MCF 10A (cell line): ENCODE measurements at regions of chr2 and their contacts with region 1.

Region 1: GRCh38 chr2:139142252-139142880 is 362.2 kb upstream of the NXPH2 start:
- DNase-seq: peak; percentile 33
- H3K4me3 Mint-ChIP-seq: no peak overlapping the region
- H3K27ac Mint-ChIP-seq: no peak overlapping the region
- H3K4me1 Mint-ChIP-seq: no peaks in the 10 kb centered on the region
- H3K27me3 Mint-ChIP-seq: no peaks in the 10 kb centered on the region
- CTCF ChIP-seq: no peak

Region 2: GRCh38 chr2:139124271-139124670 is 18.1 kb before region 1 on chr2:
- CTCF ChIA-PET with region 1: no interaction called
- POLR2A ChIA-PET with region 1: interaction called, 4 read pairs
- intact Hi-C with region 1: loop called (anchors 2 kb)
- DNase-seq: no peak
- H3K4me3 Mint-ChIP-seq: no peak overlapping the region
- H3K27ac Mint-ChIP-seq: no peak overlapping the region
- H3K4me1 Mint-ChIP-seq: no peaks in the 10 kb centered on the region
- H3K27me3 Mint-ChIP-seq: no peaks in the 10 kb centered on the region
- CTCF ChIP-seq: no peak

Region 3: DNA sequence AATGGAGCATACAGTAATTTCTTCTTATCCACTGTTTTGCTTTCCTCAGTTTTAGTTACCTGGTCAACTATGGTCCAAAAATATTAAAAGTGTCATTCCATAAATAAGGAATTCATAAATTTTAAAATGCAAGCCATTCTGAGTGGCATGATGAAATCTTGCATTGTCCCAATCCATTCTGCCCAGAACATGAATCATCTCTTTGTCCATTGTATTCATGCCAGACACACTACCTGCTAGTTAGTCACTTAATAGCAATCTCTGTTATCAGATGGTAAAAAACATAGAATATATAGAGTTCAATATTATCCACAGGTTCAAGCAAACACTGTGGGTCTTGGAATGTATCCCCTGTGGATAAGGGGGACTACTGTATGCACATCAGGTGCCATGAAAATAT is 510.0 kb after region 1 on chr2:
- CTCF ChIA-PET with region 1: no interaction called
- POLR2A ChIA-PET with region 1: no interaction called
- intact Hi-C with region 1: no loop called
- DNase-seq: no peak
- H3K4me3 Mint-ChIP-seq: no peak overlapping the region
- H3K27ac Mint-ChIP-seq: no peak overlapping the region
- H3K4me1 Mint-ChIP-seq: no peaks in the 10 kb centered on the region
- H3K27me3 Mint-ChIP-seq: no peaks in the 10 kb centered on the region
- CTCF ChIP-seq: no peak